HEK293T (cell line): ENCODE measurements at regions of chr10 and their contacts with region 1.

Region 1: GRCh38 chr10:14173706-14174594 is 156.8 kb downstream of the FRMD4A start:
- DNase-seq: peak; percentile 41

Region 2: DNA sequence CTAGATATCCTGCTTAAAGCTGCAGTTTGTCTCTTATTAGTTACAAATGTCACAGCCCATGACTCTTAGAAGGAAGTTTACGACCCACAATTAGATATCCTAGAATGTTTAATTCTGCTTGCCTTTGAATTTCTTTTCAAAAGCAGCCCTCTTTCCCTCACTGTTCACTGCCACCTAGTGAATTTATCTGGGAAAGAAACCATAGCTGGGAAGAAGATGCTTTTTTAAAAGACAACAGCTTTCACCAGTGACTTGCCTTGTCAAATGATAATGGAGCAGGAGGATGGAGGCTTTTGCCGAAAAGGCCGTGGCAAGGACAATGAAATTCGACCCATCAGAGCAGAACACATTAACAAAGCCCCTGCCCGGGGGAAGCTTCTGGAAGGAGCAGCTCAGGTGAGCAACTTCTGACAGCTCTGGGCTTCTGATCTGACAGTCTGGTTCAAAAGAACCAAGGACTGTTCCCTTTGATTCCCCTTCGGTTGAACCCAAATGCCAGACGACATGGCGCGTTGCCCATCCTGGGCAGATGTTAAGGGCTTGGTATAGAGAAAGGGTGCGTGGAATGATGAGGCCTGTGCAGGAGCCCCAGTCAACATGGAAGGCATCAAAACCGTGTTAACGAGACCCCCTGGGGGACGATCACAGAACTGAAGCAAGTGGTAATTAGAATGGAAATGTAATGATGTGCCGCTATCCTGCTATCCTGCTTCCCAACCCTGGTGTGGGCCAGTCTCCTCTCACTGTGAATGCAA is 80.0 kb before region 1 on chr10:
- CTCF ChIA-PET with region 1: no interaction called
- POLR2A ChIA-PET with region 1: no interaction called
- DNase-seq: no peak

Region 3: GRCh38 chr10:14153570-14154055 is 20.3 kb before region 1 on chr10:
- CTCF ChIA-PET with region 1: no interaction called
- POLR2A ChIA-PET with region 1: no interaction called
- DNase-seq: no peak

Region 4: GRCh38 chr10:14185316-14186045 is 11.5 kb after region 1 on chr10:
- CTCF ChIA-PET with region 1: interaction called, 13 read pairs
- POLR2A ChIA-PET with region 1: interaction called, 4 read pairs
- DNase-seq: peak; percentile 52

Region 5: DNA sequence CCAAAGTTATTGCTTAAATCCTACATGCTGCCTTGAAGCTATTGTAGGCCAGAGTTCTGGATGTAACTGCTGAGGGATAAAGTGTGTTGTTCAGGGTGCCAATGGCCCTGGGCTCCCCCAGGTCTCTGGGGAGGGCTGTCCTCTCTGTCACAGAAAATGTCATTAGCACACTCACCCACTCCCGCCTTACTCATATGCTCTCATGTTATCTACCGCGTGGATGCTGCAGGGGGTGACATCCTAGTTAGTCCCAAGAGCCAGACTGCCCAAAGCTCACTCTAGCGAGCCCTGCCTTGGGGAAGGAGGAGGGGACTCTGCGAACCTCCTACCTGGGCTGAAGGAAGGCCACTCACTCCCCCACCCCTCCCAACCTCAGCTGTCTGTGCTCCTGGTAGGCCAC is 34.3 kb after region 1 on chr10:
- CTCF ChIA-PET with region 1: no interaction called
- POLR2A ChIA-PET with region 1: no interaction called
- DNase-seq: no peak

Region 6: GRCh38 chr10:14225379-14226150 is 51.6 kb after region 1 on chr10:
- CTCF ChIA-PET with region 1: no interaction called
- POLR2A ChIA-PET with region 1: no interaction called
- DNase-seq: no peak